Dendritic cell treated with granulocyte-macrophage colony-stimulating factor and Interleukin-4, amounts not matched to agents 40 ng/mL and 50 ng/mL, for 4 days (primary cell): ENCODE measurements at regions of chr6 and their contacts with region 1.

Region 1: GRCh38 chr6:31729515-31729978 is 448 bp upstream of the DDAH2 start:
- H3K4me3 Mint-ChIP-seq: peak overlapping the region; percentile 99
- H3K27ac Mint-ChIP-seq: peak overlapping the region; percentile 99
- H3K4me1 Mint-ChIP-seq: peaks cover 91% of the 10 kb centered on the region
- H3K27me3 Mint-ChIP-seq: peaks cover 3% of the 10 kb centered on the region

Region 2: DNA sequence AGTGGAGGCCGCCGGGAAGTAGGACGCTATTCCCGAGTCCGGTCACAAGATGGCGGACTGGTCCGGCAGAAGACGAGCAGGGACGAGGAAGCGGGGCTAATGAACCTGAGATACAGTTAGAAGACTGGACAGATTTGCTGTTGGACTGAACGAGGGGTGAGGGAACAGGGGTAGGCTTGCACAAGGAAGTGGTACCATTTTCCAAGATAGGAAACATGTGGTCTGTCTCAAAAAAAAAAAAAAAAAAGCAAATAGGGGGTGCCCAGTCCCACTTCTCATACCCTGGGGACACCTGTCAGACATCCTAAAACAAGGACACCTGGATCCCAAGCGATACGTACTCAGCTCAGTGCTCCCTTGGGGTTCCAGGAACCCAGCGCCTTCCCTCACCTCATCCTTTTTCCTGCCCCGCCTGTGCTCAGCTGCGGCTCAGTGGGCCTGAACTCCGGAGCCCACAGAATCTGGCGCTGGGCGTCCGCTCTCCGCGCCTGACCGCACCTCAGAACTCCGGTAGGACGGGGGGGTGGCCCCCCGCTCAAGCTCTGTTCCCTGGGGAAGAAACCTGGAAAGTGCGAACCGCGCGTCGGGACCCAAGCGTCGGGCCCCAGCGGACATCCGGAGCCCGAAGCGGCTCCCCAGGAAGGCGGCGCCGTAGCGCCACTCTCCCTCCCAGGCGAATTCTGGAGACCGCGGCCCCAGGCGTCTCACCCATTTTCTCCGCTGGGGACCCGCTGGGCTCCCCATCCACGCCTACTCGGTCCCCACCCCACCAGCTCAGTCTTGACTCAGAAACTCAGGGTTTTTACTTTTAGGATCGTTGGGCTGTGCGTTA is 48.5 kb before region 1 on chr6 and contains the start of gene LY6G5C:
- intact Hi-C with region 1: loop called (anchors 1 kb)
- H3K4me3 Mint-ChIP-seq: peak within 1 kb of the TSS; percentile 74
- H3K27ac Mint-ChIP-seq: peak within 1 kb of the TSS; percentile 55
- H3K4me1 Mint-ChIP-seq: peaks cover 55% of the 10 kb centered on the region
- H3K27me3 Mint-ChIP-seq: peaks cover 9% of the 10 kb centered on the region

Region 3: DNA sequence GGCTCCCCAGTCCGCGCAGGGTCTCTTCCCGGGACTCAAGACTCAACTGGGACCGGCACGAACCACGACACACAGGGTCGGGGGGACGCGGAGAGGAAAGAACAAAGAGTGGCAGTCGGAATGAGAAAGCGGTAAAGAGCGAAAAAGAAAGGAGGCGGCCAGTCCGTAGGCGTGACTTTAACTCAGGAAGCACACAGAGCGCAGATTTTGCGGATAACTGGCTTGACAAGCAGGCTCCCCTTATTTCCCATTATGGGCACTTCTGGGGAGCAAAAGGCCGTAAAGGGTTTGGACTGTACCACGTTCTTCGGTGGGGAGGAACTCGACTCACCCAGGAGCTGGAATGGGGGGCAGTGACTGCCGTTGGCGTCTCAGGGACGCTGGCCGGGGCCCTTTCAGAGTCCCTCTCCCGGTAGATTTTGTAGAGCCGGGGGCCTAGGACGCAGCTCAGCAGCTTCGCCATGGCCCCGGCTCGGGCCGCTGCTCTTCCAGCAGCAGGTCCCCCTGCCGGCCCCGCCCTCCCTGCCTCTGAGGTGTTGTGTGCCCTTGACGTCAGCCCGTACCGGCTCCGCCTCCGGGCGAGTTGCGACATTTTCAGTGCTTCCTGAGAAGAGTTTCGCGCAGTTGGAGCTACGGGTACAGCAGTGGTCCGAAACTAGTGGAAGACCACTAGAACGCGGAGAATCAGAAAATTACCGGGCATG is 26.6 kb before region 1 on chr6 and contains the start of gene ABHD16A:
- intact Hi-C with region 1: loop called (anchors 1 kb)
- H3K4me3 Mint-ChIP-seq: peak within 1 kb of the TSS; percentile 98
- H3K27ac Mint-ChIP-seq: peak within 1 kb of the TSS; percentile 93
- H3K4me1 Mint-ChIP-seq: peaks cover 39% of the 10 kb centered on the region
- H3K27me3 Mint-ChIP-seq: no peaks in the 10 kb centered on the region